ENCODE measurements at regions of chr5 and their contacts with region 1.

Region 1: DNA sequence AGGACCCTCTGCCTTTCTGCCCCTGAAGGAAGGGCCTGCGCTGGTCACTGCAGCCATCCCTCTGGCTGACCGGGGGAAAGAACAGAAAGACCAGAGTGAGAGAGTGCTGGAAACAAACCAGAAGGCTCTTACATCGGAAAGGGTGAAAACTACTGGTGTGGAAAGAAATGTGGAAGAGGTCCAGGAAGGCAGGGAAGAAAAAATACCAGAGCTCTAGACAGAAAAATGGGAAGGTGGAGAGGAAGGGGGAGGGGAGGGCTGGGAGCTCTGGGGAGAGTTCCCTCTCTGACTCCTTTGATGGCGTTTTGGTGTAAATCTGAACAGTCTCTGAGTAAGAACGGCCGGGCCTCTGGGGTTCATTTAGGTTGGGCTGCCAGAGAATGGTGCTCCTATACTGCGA is 47.7 kb downstream of the COL23A1 start:
- DNase-seq: peak; percentile 82 to 86
- H3K4me3 ChIP-seq: no peak overlapping the region
- H3K27ac ChIP-seq: peak overlapping the region; percentile 77 to 91 (median 89)
- H3K4me1 ChIP-seq: peaks cover 60 to 78% of the 10 kb centered on the region in 2 donors
- H3K27me3 ChIP-seq: no peaks in the 10 kb centered on the region
- CTCF ChIP-seq: no peak
- POLR2A ChIP-seq: peak in 1 of 2 donors; percentile 68

Region 2: DNA sequence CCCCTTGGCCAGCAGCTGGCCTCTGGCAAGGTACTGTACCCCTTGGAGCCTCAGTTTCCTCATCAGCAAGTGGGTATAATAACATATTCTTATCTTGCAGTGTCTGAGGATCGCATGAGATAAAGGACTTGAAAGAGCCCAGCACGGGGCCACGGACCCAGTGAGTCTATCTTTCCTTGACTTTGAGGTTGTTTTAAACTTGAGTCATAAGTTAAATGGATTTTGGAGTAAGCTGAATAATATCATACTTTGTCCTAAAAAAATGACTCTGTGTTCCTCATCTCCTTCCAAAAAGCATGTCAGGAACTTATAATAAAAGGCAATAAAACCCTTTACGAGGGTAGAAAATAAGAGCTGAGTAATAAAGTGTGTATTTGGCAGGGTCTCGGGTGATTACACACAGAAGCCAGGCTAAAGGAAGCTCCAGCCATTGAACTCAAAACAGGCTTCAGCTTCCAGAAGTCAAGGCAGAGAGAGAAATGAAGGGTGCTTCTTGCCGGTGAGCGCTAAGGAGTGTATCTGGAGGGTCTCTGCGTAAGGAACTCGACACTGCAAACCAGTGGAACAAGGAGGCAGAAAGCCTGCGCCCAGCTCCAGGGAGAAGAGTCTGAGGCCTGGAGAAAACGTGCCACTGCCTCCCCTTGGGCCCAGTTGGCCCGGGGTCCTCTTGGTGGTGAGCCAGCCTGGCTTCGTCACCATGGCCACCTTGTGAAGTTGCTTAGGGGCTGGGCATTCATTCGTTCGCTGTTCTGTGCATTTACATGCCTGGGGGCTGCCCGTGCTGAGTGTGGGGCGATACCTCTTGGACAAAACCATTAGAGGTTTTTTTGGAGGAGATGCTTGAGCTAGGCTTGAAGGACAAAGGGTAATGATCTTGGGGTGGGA is 237.5 kb before region 1 on chr5:
- intact Hi-C with region 1: no loop called
- DNase-seq: peak; percentile 67 to 75
- H3K4me3 ChIP-seq: no peak overlapping the region
- H3K27ac ChIP-seq: peak overlapping the region; percentile 73 to 90 (median 84)
- H3K4me1 ChIP-seq: peaks cover 35 to 46% of the 10 kb centered on the region in 2 donors
- H3K27me3 ChIP-seq: no peaks in the 10 kb centered on the region
- CTCF ChIP-seq: no peak
- POLR2A ChIP-seq: no peak

Region 3: GRCh38 chr5:178461004-178461730 is 81.3 kb before region 1 on chr5:
- intact Hi-C with region 1: loop called (anchors 5 kb)
- DNase-seq: peak; percentile 97
- H3K4me3 ChIP-seq: no peak overlapping the region
- H3K27ac ChIP-seq: peak overlapping the region; percentile 66 to 89 (median 67)
- H3K4me1 ChIP-seq: peaks cover 36 to 40% of the 10 kb centered on the region in 2 donors
- H3K27me3 ChIP-seq: no peaks in the 10 kb centered on the region
- CTCF ChIP-seq: peak; percentile 77 to 98 (median 94)
- POLR2A ChIP-seq: no peak

Region 4: GRCh38 chr5:178786859-178787760 is 244.7 kb after region 1 on chr5:
- intact Hi-C with region 1: no loop called
- DNase-seq: no peak
- H3K4me3 ChIP-seq: no peak overlapping the region
- H3K27ac ChIP-seq: no peak overlapping the region
- H3K4me1 ChIP-seq: no peaks in the 10 kb centered on the region
- H3K27me3 ChIP-seq: no peaks in the 10 kb centered on the region
- CTCF ChIP-seq: no peak
- POLR2A ChIP-seq: no peak